ENCODE measurements at regions of chr20 and their contacts with region 1.

Region 1: GRCh38 chr20:58850693-58851174 is at the start of gene GNAS-AS1:
- DNase-seq: peak; percentile 80
- H3K4me3 Mint-ChIP-seq: peak within 1 kb of the TSS; percentile 90
- H3K27ac Mint-ChIP-seq: peak within 1 kb of the TSS; percentile 24
- H3K4me1 Mint-ChIP-seq: peaks cover 30% of the 10 kb centered on the region
- H3K27me3 Mint-ChIP-seq: peaks cover 41% of the 10 kb centered on the region
- total RNA-seq, gene GNAS-AS1: 1.7 and 1.9 TPM in 2 replicates

Region 2: DNA sequence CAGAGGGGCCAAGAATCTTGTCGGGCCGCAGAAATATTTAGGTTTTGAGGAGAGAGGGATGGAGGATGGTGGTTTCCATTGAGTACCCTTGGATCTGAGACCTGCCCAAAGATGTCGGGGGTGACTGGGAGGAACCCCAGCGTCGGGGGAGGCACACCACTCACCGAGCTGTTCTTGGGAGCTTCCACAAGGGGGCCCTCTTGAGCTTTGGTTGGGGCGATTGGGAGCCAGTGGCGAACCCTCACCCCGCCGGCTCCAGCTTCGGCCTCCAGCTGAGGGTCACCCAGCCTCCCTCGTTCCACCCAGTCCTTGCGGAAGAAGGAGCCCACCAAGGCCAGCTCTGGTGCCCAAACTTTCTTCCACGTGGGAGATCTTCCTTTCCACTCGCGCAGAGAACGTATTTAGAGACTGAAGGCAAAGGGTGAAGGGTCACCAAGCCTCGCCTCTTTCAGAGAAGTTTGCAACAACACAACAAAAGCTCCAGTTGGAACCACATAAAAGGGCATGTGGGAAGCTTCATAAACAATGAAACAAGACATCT is 369.2 kb before region 1 on chr20:
- intact Hi-C with region 1: loop called (anchors 5 kb)
- DNase-seq: no peak
- H3K4me3 Mint-ChIP-seq: no peak overlapping the region
- H3K27ac Mint-ChIP-seq: no peak overlapping the region
- H3K4me1 Mint-ChIP-seq: peaks cover 3% of the 10 kb centered on the region
- H3K27me3 Mint-ChIP-seq: peaks cover 8% of the 10 kb centered on the region

Region 3: DNA sequence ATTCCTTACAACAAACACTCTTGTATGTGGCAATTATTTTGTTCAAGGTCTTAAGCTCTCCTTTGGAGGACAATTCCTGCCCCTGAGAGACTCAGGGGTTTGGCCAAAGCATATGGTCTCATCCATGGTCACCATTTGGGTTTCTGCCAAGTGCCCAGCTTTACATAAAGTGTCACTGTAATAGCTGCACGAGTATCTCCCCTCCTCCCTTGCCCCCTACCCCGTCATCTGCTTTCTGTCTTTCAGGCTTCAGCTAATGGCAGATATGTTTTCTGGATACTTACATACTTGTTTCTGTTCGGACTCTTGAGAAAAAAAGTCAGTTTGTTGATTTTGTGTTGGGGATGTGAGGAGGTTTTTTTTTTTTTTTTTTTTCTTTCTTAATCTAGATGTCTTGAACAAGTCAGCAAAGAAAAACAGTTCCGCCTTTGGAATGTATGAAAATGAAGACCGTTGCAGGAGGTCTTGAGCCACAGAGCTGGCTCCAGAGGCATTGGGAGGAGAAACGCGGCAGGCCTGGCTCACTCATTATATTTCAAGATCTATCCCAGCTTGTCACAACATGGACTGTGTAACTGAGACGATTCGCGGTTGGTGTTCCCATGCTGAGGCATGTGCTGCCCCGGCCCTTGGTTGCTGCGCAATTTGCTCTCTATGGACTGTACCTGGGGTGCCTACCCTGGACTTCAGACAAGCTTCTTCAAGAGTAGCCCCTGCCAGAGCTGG is 232.2 kb before region 1 on chr20:
- intact Hi-C with region 1: no loop called
- DNase-seq: no peak
- H3K4me3 Mint-ChIP-seq: no peak overlapping the region
- H3K27ac Mint-ChIP-seq: no peak overlapping the region
- H3K4me1 Mint-ChIP-seq: no peaks in the 10 kb centered on the region
- H3K27me3 Mint-ChIP-seq: peaks cover 1% of the 10 kb centered on the region

Region 4: GRCh38 chr20:58682662-58683531 is 167.8 kb before region 1 on chr20:
- intact Hi-C with region 1: no loop called
- DNase-seq: no peak
- H3K4me3 Mint-ChIP-seq: no peak overlapping the region
- H3K27ac Mint-ChIP-seq: no peak overlapping the region
- H3K4me1 Mint-ChIP-seq: no peaks in the 10 kb centered on the region
- H3K27me3 Mint-ChIP-seq: no peaks in the 10 kb centered on the region

Region 5: GRCh38 chr20:58818585-58819285 is 32.0 kb before region 1 on chr20:
- intact Hi-C with region 1: loop called (anchors 2 kb)
- DNase-seq: peak; percentile 55
- H3K4me3 Mint-ChIP-seq: no peak overlapping the region
- H3K27ac Mint-ChIP-seq: peak overlapping the region; percentile 40
- H3K4me1 Mint-ChIP-seq: peaks cover 15% of the 10 kb centered on the region
- H3K27me3 Mint-ChIP-seq: peaks cover 23% of the 10 kb centered on the region

Region 6: GRCh38 chr20:59403261-59403961 is 552.7 kb after region 1 on chr20:
- intact Hi-C with region 1: loop called (anchors 5 kb)
- DNase-seq: peak; percentile 55
- H3K4me3 Mint-ChIP-seq: no peak overlapping the region
- H3K27ac Mint-ChIP-seq: no peak overlapping the region
- H3K4me1 Mint-ChIP-seq: no peaks in the 10 kb centered on the region
- H3K27me3 Mint-ChIP-seq: peaks cover 14% of the 10 kb centered on the region

Measured in activated T-helper 2 cell treated with anti-CD3 and anti-CD28 coated beads, Interferon-gamma antibody, Interleukin-2, Interleukin-4, amounts not matched to agents 10 μg/mL and 5 μg/mL and 100 μg/mL, durations not matched to agents 14 hours and 24 hours and 36 hours (primary cell).